ENCODE measurements at regions of chr16 and their contacts with region 1.

Region 1: DNA sequence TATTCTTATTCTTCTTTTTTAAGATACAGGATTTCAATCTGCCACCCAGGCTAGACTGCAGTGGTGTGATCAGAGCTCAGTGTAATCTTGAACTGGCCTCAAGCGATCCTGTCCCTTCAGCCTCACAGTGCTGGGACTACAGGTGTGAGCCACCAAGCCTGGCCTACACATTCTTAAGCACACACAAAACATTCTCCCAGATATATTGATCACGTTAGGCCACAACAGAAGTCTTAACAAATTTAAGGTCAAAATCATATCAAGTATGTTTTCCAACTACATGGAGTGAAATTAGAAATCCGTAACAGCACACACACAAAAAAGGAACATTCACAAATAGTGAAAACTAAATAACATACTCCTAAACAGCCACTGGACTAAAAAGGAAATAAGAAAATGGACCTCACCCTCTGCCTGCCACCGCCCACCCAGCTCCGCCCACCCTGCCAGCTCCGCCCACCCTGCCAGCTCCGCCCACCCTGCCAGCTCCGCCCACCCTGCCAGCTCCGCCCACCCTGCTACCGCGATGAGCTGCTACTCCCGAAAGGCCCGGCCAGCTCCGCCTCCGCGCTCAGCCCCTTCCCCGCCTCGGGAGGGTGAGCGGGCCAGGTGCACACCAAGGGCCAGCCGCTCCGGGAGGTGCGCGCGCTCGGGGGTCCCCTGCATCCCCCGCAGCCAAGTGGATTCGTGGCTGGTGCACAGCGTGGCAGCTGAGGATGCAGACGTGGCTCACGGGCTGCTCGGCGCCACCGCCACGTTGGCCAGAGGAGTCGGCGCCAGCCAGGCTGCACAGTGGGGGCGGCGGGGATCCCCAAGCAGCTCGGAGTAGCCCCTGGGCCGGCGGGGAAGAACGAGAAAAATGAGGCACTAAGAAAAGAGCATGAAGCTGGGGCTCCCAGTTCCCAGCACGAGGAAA is 41.2 kb downstream of the C16orf87 start:
- DNase-seq: peak; percentile 80
- H3K4me3 ChIP-seq: peak overlapping the region; percentile 17 to 58 (median 51)
- H3K27ac ChIP-seq: peak overlapping the region; percentile 0
- H3K4me1 ChIP-seq: peaks cover 2% of the 10 kb centered on the region
- H3K27me3 ChIP-seq: peaks cover 7 to 10% of the 10 kb centered on the region in 2 experiments
- CTCF ChIP-seq: no peak
- POLR2A ChIP-seq: peak; percentile 68

Region 2: GRCh38 chr16:46696957-46697356 is 92.8 kb before region 1 on chr16:
- CTCF ChIA-PET with region 1: no interaction called
- POLR2A ChIA-PET with region 1: no interaction called
- dilution Hi-C with region 1: no loop called
- intact Hi-C with region 1: no loop called
- DNase-seq: no peak
- H3K4me3 ChIP-seq: no peak overlapping the region
- H3K27ac ChIP-seq: no peak overlapping the region
- H3K4me1 ChIP-seq: no peaks in the 10 kb centered on the region
- H3K27me3 ChIP-seq: no peaks in the 10 kb centered on the region
- CTCF ChIP-seq: no peak
- POLR2A ChIP-seq: no peak

Region 3: DNA sequence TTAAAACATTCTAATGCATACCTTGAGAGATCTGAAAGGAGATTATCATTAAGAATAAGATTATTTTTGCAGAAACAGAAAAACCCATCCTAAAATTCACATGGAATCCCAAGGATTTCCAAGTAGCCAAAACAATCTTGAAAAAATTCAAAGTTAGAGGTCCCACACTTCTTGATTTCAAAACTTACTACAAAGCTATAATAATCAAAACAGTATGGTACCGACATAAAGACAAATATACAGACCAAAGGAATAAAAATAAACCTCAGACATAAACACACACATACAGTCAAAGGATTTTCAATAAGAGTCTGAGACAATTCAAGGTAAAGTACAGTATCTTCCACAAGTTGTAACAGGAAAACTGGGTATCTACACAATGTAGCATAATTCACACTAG is 25.0 kb after region 1 on chr16:
- CTCF ChIA-PET with region 1: no interaction called
- POLR2A ChIA-PET with region 1: no interaction called
- dilution Hi-C with region 1: no loop called
- intact Hi-C with region 1: no loop called
- DNase-seq: no peak
- H3K4me3 ChIP-seq: no peak overlapping the region
- H3K27ac ChIP-seq: no peak overlapping the region
- H3K4me1 ChIP-seq: peaks cover 6% of the 10 kb centered on the region
- H3K27me3 ChIP-seq: no peaks in the 10 kb centered on the region
- CTCF ChIP-seq: no peak
- POLR2A ChIP-seq: no peak

Region 4: GRCh38 chr16:46830902-46831647 is 41.3 kb after region 1 on chr16 and contains the start of gene C16orf87:
- CTCF ChIA-PET with region 1: interaction called, 5 read pairs
- POLR2A ChIA-PET with region 1: interaction called, 11 read pairs
- dilution Hi-C with region 1: no loop called
- intact Hi-C with region 1: loop called (anchors 1 kb)
- DNase-seq: peak; percentile 93
- H3K4me3 ChIP-seq: peak within 1 kb of the TSS; percentile 74 to 91 (median 82)
- H3K27ac ChIP-seq: peak within 1 kb of the TSS; percentile 50
- H3K4me1 ChIP-seq: peaks cover 24% of the 10 kb centered on the region
- H3K27me3 ChIP-seq: peaks cover 8 to 13% of the 10 kb centered on the region in 2 experiments
- CTCF ChIP-seq: no peak
- POLR2A ChIP-seq: peak; percentile 43
- total RNA-seq, gene C16orf87: 8.5 and 11.1 TPM in 2 replicates

Region 5: DNA sequence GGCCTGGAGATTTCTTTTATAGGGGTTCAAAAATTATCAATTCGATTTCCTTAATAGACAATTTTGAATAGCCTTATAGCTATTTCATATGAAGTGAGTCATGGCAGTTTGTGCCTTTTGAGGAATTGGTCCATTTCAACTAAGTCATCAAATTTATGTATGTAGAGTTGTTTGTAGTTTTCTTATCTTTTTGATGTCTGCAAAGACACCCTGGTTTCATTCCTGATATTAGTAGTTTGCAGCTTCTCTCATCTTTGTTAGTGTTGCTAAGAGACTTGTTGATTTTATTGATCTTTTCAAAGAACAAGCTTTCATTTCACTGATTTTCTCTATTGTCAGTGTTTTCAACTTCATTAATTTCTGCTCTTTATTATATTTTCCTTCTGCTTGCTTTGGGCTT is 1776.0 kb after region 1 on chr16:
- CTCF ChIA-PET with region 1: no interaction called
- POLR2A ChIA-PET with region 1: no interaction called
- dilution Hi-C with region 1: no loop called
- intact Hi-C with region 1: no loop called
- DNase-seq: no peak
- H3K4me3 ChIP-seq: no peak overlapping the region
- H3K27ac ChIP-seq: no peak overlapping the region
- H3K4me1 ChIP-seq: peaks cover 12% of the 10 kb centered on the region
- H3K27me3 ChIP-seq: no peaks in the 10 kb centered on the region
- CTCF ChIP-seq: no peak
- POLR2A ChIP-seq: no peak

Measured in endothelial cell of umbilical vein (primary cell).